MCF 10A (cell line): ENCODE measurements at regions of chr12 and their contacts with region 1.

Region 1: GRCh38 chr12:46382964-46383653 is 10.5 kb upstream of the SLC38A2 start:
- DNase-seq: peak; percentile 97
- H3K4me3 Mint-ChIP-seq: peak overlapping the region; percentile 91
- H3K27ac Mint-ChIP-seq: peak overlapping the region; percentile 97
- H3K4me1 Mint-ChIP-seq: peaks cover 33% of the 10 kb centered on the region
- H3K27me3 Mint-ChIP-seq: no peaks in the 10 kb centered on the region
- CTCF ChIP-seq: no peak

Region 2: DNA sequence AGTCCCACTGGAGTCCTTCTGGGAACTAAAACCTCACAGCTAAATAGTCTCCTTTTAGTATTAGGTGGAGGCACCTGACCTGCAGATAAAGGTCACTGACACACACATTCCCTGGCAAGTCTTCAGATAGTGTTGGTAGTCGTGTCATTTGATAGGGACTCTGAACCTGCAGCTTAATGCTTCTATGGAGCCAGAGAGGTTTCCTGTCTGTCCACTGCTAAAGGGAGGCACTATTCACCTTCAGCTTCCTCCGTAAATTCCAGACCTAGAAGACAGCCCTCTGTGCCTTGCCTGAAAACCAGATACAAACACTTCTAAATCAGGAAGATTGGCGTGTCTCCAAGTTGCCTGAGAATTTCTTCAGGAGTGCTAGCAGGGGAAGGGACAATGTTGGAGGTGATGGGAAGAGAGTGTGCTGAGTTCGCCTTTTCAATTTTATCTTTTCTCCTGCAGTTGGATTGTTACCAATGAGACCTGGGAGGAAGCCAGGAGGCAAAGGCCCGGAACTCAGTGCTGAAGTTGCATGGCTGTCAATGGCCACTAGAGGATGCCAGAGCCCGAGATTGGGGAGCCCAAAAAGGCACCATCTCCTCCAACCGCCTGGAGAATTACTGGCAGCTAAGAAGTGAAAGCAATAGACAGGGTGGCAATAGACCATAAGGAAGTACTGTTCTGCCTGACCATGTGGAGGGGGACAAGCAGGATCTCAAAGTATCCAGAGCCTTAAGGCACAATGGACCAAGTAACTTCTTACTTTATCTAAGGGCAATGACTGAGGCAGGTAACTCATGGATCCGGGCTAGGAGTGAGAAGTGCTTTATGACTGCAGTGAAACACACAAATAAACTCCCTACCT is 311.1 kb before region 1 on chr12:
- CTCF ChIA-PET with region 1: no interaction called
- POLR2A ChIA-PET with region 1: no interaction called
- intact Hi-C with region 1: no loop called
- DNase-seq: peak; percentile 87
- H3K4me3 Mint-ChIP-seq: no peak overlapping the region
- H3K27ac Mint-ChIP-seq: peak overlapping the region; percentile 47
- H3K4me1 Mint-ChIP-seq: peaks cover 20% of the 10 kb centered on the region
- H3K27me3 Mint-ChIP-seq: no peaks in the 10 kb centered on the region
- CTCF ChIP-seq: peak; percentile 95

Region 3: DNA sequence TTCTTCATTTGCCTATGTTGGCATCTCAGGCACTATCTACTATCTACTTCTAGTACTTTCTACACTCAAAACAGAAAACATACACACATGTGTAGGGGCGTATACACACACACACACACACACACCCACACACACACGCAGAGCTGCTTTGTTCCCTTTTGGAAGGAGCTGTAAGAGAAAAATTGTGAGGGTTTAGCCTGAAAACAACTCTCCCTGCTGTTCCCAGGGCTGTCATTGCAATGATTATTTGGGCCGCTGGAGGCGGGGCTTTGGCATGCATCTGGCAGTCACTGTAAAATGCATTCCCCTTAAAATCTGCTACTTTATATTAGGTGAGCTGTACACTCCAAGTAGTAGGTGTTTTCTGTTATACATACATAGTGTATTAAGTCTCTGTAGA is 18.6 kb after region 1 on chr12:
- CTCF ChIA-PET with region 1: interaction called, 3 read pairs
- POLR2A ChIA-PET with region 1: interaction called, 57 read pairs
- intact Hi-C with region 1: no loop called
- DNase-seq: peak; percentile 49
- H3K4me3 Mint-ChIP-seq: no peak overlapping the region
- H3K27ac Mint-ChIP-seq: peak overlapping the region; percentile 86
- H3K4me1 Mint-ChIP-seq: peaks cover 48% of the 10 kb centered on the region
- H3K27me3 Mint-ChIP-seq: no peaks in the 10 kb centered on the region
- CTCF ChIP-seq: peak; percentile 19

Region 4: DNA sequence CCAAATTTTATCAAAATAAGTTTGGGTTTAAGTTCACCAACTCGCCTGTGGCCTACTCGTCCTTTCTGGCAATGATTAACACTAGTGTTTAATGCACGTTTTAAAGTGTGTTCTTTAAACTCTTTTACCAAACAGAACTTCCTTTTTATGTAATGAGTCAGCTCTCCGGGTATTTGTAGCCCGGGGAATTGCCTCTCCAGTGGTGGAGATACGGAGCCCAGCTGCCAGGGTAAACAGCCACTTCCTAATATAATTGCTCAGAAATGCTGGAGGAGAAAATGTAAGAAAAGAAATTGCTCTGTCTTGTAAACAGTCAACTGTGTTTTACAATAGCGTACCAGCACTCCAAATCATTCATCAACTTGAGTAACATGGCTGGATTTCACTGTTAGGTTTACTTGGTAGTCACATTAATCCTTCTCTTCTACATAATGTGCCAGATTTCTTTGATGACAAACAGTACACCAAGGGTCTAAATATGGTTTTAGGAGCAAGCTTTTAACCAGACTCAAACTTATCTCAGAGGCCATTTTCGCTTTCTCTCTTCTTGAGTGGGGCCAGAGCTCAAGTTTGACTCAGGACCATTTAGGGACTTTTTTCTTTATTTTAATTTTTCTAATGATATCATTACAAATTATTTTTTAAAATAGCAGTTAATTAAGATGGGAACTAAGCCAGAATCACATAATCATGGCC is 90.7 kb after region 1 on chr12:
- CTCF ChIA-PET with region 1: interaction called, 3 read pairs
- POLR2A ChIA-PET with region 1: interaction called, 10 read pairs
- intact Hi-C with region 1: no loop called
- DNase-seq: peak; percentile 89
- H3K4me3 Mint-ChIP-seq: peak overlapping the region; percentile 58
- H3K27ac Mint-ChIP-seq: peak overlapping the region; percentile 94
- H3K4me1 Mint-ChIP-seq: peaks cover 44% of the 10 kb centered on the region
- H3K27me3 Mint-ChIP-seq: no peaks in the 10 kb centered on the region
- CTCF ChIP-seq: no peak

Region 5: GRCh38 chr12:46546634-46547286 is 163.7 kb after region 1 on chr12:
- CTCF ChIA-PET with region 1: interaction called, 3 read pairs
- POLR2A ChIA-PET with region 1: interaction called, 40 read pairs
- intact Hi-C with region 1: no loop called
- DNase-seq: no peak
- H3K4me3 Mint-ChIP-seq: no peak overlapping the region
- H3K27ac Mint-ChIP-seq: peak overlapping the region; percentile 98
- H3K4me1 Mint-ChIP-seq: peaks cover 55% of the 10 kb centered on the region
- H3K27me3 Mint-ChIP-seq: no peaks in the 10 kb centered on the region
- CTCF ChIP-seq: no peak

Region 6: DNA sequence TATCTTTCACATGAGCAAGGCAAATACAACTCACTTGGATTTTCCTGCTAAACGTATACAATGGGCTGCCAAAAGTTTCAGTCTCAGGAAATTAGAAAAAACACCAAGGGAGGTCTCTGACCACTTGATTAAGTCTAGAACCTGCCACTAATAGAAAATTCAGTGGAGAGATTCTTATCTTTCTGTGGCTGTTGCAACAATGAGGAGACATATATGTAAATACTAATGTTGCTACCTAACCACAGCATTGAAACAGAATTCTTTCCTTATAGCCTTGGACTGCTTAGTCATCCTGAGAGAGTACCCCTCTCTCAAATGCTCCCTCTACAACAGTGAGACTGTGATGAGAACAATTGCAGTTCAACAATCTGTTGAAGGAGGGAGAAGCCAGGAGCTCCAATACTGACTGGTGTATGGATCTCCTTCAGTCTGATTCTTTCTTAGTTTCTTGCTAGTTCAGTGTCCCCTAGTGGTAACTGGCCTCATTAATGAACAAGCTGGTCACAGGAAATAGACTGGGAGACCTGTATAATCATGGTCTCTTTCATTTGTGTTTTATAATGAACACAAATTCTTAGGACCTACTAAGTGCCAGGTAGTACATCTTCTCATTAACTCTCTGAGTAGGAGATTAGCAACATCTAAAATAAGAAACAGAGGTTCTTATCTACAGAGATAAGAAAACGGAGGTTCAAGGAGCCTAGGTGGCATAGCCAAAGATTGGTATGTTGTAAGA is 278.2 kb after region 1 on chr12:
- CTCF ChIA-PET with region 1: interaction called, 4 read pairs
- POLR2A ChIA-PET with region 1: interaction called, 68 read pairs
- intact Hi-C with region 1: loop called (anchors 1 kb)
- DNase-seq: peak; percentile 79
- H3K4me3 Mint-ChIP-seq: no peak overlapping the region
- H3K27ac Mint-ChIP-seq: peak overlapping the region; percentile 80
- H3K4me1 Mint-ChIP-seq: peaks cover 63% of the 10 kb centered on the region
- H3K27me3 Mint-ChIP-seq: no peaks in the 10 kb centered on the region
- CTCF ChIP-seq: peak; percentile 57